ENCODE measurements at regions of chr4 and their contacts with region 1.

Region 1: GRCh38 chr4:99816545-99817308 is at the start of gene DAPP1:
- DNase-seq: peak; percentile 92
- ATAC-seq: peak; percentile 98
- H3K4me3 Mint-ChIP-seq: peak within 1 kb of the TSS; percentile 90
- H3K27ac Mint-ChIP-seq: peak within 1 kb of the TSS; percentile 96
- H3K4me1 Mint-ChIP-seq: peaks cover 65% of the 10 kb centered on the region
- H3K27me3 Mint-ChIP-seq: no peaks in the 10 kb centered on the region
- total RNA-seq, gene DAPP1: 16.7 to 17.5 TPM

Region 2: GRCh38 chr4:98969874-98970785 is 846.6 kb before region 1 on chr4:
- CTCF ChIA-PET with region 1: no interaction called
- POLR2A ChIA-PET with region 1: no interaction called
- DNase-seq: no peak
- ATAC-seq: no peak
- H3K4me3 Mint-ChIP-seq: no peak overlapping the region
- H3K27ac Mint-ChIP-seq: no peak overlapping the region
- H3K4me1 Mint-ChIP-seq: no peaks in the 10 kb centered on the region
- H3K27me3 Mint-ChIP-seq: peaks cover 17% of the 10 kb centered on the region

Region 3: GRCh38 chr4:99696801-99697200 is 119.9 kb before region 1 on chr4:
- CTCF ChIA-PET with region 1: no interaction called
- POLR2A ChIA-PET with region 1: no interaction called
- DNase-seq: no peak
- ATAC-seq: no peak
- H3K4me3 Mint-ChIP-seq: no peak overlapping the region
- H3K27ac Mint-ChIP-seq: no peak overlapping the region
- H3K4me1 Mint-ChIP-seq: no peaks in the 10 kb centered on the region
- H3K27me3 Mint-ChIP-seq: peaks cover 5% of the 10 kb centered on the region

Region 4: DNA sequence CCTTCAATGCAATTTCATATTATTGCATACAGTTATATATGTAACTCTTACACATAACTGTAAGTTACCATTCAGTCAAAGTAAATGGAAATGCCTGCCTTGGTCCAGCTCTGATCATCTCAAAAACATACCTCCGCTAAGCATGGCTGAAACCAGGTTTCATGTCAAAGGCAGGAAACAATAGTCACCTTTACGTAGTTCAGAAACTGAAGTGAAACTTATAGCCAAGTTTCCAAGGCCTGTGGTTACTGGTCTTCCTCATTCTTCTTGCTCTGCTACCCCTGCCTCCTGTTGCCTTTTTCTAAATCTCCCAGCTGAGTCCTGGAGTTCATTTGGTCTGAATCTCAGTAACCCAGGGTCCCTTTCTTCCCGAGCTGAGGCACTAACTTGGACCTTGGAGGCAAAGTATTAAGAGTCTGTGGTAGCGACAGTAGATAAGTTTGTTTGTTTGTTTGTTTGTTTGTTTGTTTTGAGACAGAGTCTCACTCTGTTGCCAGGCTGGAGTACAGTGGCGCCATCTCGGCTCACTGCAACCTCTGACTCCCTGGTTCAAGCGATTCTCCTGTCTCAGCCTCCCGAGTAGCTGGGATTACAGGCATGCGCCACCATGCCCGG is 30.7 kb after region 1 on chr4:
- CTCF ChIA-PET with region 1: interaction called, 23 read pairs
- POLR2A ChIA-PET with region 1: interaction called, 24 read pairs
- DNase-seq: peak; percentile 34
- ATAC-seq: peak; percentile 71
- H3K4me3 Mint-ChIP-seq: peak overlapping the region; percentile 5
- H3K27ac Mint-ChIP-seq: peak overlapping the region; percentile 84
- H3K4me1 Mint-ChIP-seq: peaks cover 62% of the 10 kb centered on the region
- H3K27me3 Mint-ChIP-seq: no peaks in the 10 kb centered on the region

Region 5: DNA sequence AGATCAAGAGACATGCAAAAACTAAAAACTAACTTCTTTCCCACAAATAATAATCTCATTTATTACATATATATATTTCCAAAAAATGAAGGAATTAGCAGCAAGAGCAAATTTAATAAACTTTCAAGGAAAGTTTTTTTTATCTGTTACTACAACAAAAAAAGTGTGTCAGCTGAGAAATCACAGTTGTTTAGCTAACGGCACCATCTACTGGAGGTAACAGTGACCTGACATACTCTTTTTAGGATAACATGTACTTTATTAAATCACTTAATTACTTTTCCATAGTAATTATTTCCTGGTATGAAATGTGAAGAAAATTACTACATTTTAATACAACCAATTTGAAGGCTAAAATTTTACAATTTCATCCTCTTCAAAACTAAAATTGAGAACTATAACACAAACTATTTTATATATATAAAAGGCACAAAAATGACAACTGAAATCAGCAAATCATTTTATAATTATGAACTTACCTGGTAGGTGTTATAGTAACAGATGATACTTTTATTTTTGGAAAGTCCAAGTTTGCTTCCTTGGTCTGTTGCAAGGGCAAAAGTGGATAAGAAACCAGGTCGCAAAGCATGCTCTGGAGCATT is 68.4 kb after region 1 on chr4:
- CTCF ChIA-PET with region 1: interaction called, 57 read pairs
- POLR2A ChIA-PET with region 1: interaction called, 5 read pairs
- DNase-seq: peak; percentile 62
- ATAC-seq: no peak
- H3K4me3 Mint-ChIP-seq: no peak overlapping the region
- H3K27ac Mint-ChIP-seq: no peak overlapping the region
- H3K4me1 Mint-ChIP-seq: peaks cover 7% of the 10 kb centered on the region
- H3K27me3 Mint-ChIP-seq: no peaks in the 10 kb centered on the region

Region 6: DNA sequence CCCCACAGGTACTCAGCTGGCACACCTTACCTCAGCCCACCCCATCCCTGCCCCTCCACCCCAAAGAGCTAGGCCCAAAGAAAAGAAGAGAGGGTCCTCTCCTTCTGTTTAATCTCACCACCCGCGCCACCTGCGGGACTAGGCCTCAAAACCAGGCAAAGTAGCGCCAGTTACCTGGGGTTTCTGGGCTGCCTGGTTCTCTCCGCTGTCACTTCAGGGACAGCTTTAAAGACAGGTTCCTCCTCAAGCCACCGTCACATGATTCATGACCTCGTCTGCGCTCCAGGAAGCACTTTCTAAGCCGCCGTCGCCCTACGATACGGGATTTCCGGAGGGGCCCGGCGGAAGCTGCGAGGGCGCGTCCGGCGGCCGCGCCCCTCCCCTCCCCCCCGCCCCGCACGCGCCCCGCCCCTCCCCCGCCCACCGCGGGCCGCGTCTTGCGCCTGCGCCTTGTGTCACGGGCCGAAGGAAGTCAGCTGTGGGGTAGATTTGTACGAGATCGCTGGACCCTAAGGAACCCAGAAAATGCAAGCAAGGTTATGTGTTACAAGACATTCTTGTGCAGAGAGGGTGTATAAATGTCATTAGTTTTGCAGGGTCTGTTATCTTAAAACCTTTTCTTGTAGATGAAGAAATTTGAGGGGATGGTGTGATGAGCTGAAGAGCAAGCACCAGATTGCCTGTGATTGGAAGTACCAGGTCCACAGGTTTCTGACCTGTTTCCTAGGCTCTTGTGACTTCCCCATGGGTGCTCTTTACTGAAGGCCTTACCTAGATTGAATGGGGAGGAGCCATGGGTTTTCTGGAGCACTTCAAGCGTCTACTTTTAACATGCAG is 77.7 kb after region 1 on chr4 and contains the start of gene LAMTOR3:
- CTCF ChIA-PET with region 1: interaction called, 11 read pairs
- POLR2A ChIA-PET with region 1: interaction called, 10 read pairs
- DNase-seq: peak; percentile 94
- ATAC-seq: peak; percentile 99
- H3K4me3 Mint-ChIP-seq: peak within 1 kb of the TSS; percentile 96
- H3K27ac Mint-ChIP-seq: peak within 1 kb of the TSS; percentile 96
- H3K4me1 Mint-ChIP-seq: peaks cover 38% of the 10 kb centered on the region
- H3K27me3 Mint-ChIP-seq: no peaks in the 10 kb centered on the region
- total RNA-seq, gene LAMTOR3: 26.8 to 28.8 TPM

Measured in activated CD8-positive, alpha-beta T cell treated with anti-CD3 and anti-CD28 coated beads, Interleukin-2, amount 10 ng/mL, durations not matched to agents 7 days and 5 days (primary cell).